ENCODE measurements at regions of chr12 and their contacts with region 1.

Region 1: GRCh38 chr12:21683115-21683514 is 25.5 kb upstream of the LDHB start:
- DNase-seq: no peak
- ATAC-seq: no peak
- H3K4me3 ChIP-seq: no peak overlapping the region
- H3K27ac ChIP-seq: no peak overlapping the region
- H3K4me1 ChIP-seq: no peaks in the 10 kb centered on the region
- H3K27me3 ChIP-seq: no peaks in the 10 kb centered on the region
- CTCF ChIP-seq: no peak
- EP300 ChIP-seq: no peak
- POLR2A ChIP-seq: no peak
- RAD21 ChIP-seq: no peak

Region 2: DNA sequence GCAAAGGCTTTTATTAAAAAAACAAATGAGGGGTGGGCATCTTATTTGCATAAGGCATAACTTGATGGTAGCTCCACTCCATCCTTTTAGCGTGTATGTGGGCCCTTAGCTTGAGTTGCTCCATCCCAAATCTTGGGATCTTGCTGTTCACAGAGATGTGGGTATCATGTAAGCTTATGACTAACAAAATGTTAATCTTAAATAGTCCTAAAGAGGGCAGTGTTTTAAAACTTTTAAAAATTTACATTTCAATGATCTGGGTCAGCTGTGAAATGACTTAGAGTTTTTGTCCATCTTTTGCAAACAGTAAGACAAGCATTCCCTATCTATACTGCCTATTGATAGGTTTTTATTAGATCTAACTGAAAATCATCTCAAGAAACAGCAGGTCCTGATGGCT is 434.4 kb before region 1 on chr12:
- CTCF ChIA-PET with region 1: interaction called, 30 read pairs
- POLR2A ChIA-PET with region 1: no interaction called
- RAD21 ChIA-PET with region 1: interaction called, 7 read pairs
- SMC1A ChIA-PET with region 1: interaction called, 7 read pairs
- in situ Hi-C with region 1: loop called (anchors 5 kb)
- intact Hi-C with region 1: loop called (anchors 2 kb)
- DNase-seq: no peak
- ATAC-seq: peak; percentile 56; the same call in 2 of the 3 replicates
- H3K4me3 ChIP-seq: no peak overlapping the region
- H3K27ac ChIP-seq: no peak overlapping the region
- H3K4me1 ChIP-seq: no peaks in the 10 kb centered on the region
- H3K27me3 ChIP-seq: no peaks in the 10 kb centered on the region
- CTCF ChIP-seq: peak in 1 of 3 experiments; percentile 18; a peak in 2 of 6 replicates
- EP300 ChIP-seq: no peak
- POLR2A ChIP-seq: no peak
- RAD21 ChIP-seq: no peak

Region 3: GRCh38 chr12:21308785-21309184 is 374.3 kb before region 1 on chr12:
- CTCF ChIA-PET with region 1: interaction called, 27 read pairs
- POLR2A ChIA-PET with region 1: no interaction called
- RAD21 ChIA-PET with region 1: interaction called, 5 read pairs
- SMC1A ChIA-PET with region 1: no interaction called
- in situ Hi-C with region 1: loop called (anchors 10 kb)
- intact Hi-C with region 1: no loop called
- DNase-seq: no peak
- ATAC-seq: no peak
- H3K4me3 ChIP-seq: no peak overlapping the region
- H3K27ac ChIP-seq: no peak overlapping the region
- H3K4me1 ChIP-seq: no peaks in the 10 kb centered on the region
- H3K27me3 ChIP-seq: no peaks in the 10 kb centered on the region
- CTCF ChIP-seq: no peak
- EP300 ChIP-seq: no peak
- POLR2A ChIP-seq: no peak
- RAD21 ChIP-seq: no peak

Region 4: DNA sequence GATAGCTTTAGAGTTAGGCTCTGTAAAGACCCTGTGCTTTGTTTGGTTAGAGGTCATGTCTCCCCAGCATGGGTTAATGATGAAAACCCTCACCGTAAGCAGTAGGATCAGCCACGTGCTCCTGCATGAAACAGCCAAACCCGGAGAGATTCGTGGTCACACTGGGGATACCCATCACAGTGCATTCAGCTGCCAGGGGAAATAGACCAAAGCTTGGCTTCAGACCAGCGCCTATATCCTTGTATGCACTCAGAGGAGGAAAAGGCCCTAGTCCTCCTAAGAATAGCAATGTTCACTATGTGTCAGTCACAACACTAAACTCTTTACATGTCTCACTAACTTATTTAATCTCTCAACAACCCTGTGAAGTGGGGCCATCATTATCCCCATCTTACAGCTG is 140.7 kb before region 1 on chr12:
- CTCF ChIA-PET with region 1: no interaction called
- POLR2A ChIA-PET with region 1: no interaction called
- RAD21 ChIA-PET with region 1: no interaction called
- SMC1A ChIA-PET with region 1: no interaction called
- in situ Hi-C with region 1: no loop called
- intact Hi-C with region 1: no loop called
- DNase-seq: no peak
- ATAC-seq: peak; percentile 21; the same call in 2 of the 3 replicates
- H3K4me3 ChIP-seq: no peak overlapping the region
- H3K27ac ChIP-seq: no peak overlapping the region
- H3K4me1 ChIP-seq: no peaks in the 10 kb centered on the region
- H3K27me3 ChIP-seq: no peaks in the 10 kb centered on the region
- CTCF ChIP-seq: no peak
- EP300 ChIP-seq: no peak
- POLR2A ChIP-seq: no peak
- RAD21 ChIP-seq: no peak

Region 5: DNA sequence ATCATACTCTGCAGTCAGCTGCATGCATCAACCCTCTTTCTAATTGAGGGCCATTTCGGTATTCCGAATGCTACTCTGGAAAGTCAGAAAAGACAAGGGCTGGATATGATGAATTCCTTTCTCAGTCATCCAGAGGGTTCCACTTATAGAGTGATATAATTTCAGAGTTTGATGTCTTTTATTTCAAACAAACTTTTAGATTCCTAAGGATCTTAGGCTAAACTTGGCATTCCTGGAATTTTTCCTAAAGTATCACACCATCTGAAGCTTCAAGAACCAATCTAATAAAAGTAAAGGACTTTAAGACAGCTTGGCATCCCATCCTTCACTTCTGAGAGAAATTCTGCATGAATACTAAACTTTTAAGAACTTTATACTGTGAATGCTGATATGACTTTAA is 160.7 kb after region 1 on chr12:
- CTCF ChIA-PET with region 1: no interaction called
- POLR2A ChIA-PET with region 1: no interaction called
- RAD21 ChIA-PET with region 1: no interaction called
- SMC1A ChIA-PET with region 1: no interaction called
- in situ Hi-C with region 1: no loop called
- intact Hi-C with region 1: no loop called
- DNase-seq: no peak
- ATAC-seq: no peak
- H3K4me3 ChIP-seq: no peak overlapping the region
- H3K27ac ChIP-seq: no peak overlapping the region
- H3K4me1 ChIP-seq: no peaks in the 10 kb centered on the region
- H3K27me3 ChIP-seq: no peaks in the 10 kb centered on the region
- CTCF ChIP-seq: no peak
- EP300 ChIP-seq: no peak
- POLR2A ChIP-seq: no peak
- RAD21 ChIP-seq: no peak

Measured in GM12878 (cell line).